CD4-positive, alpha-beta memory T cell (primary cell): ENCODE measurements at regions of chr19 and their contacts with region 1.

Region 1: GRCh38 chr19:15418588-15419412 is at the start of gene AKAP8L:
- DNase-seq: peak; percentile 99 to 100 (median 100)
- H3K4me3 ChIP-seq: peak within 1 kb of the TSS; percentile 91 to 95
- H3K4me3 Mint-ChIP-seq: peak within 1 kb of the TSS; percentile 96 to 100 (median 100)
- H3K27ac ChIP-seq: peak within 1 kb of the TSS; percentile 77
- H3K27ac Mint-ChIP-seq: peak within 1 kb of the TSS; percentile 87 to 100 (median 99)
- H3K4me1 ChIP-seq: peaks cover 45% of the 10 kb centered on the region
- H3K4me1 Mint-ChIP-seq: peaks cover 31 to 58% (median 38%) of the 10 kb centered on the region in 4 donors
- H3K27me3 ChIP-seq: no peaks in the 10 kb centered on the region
- H3K27me3 Mint-ChIP-seq: no peaks in the 10 kb centered on the region
- total RNA-seq, gene AKAP8L: 177 to 182 TPM

Region 2: DNA sequence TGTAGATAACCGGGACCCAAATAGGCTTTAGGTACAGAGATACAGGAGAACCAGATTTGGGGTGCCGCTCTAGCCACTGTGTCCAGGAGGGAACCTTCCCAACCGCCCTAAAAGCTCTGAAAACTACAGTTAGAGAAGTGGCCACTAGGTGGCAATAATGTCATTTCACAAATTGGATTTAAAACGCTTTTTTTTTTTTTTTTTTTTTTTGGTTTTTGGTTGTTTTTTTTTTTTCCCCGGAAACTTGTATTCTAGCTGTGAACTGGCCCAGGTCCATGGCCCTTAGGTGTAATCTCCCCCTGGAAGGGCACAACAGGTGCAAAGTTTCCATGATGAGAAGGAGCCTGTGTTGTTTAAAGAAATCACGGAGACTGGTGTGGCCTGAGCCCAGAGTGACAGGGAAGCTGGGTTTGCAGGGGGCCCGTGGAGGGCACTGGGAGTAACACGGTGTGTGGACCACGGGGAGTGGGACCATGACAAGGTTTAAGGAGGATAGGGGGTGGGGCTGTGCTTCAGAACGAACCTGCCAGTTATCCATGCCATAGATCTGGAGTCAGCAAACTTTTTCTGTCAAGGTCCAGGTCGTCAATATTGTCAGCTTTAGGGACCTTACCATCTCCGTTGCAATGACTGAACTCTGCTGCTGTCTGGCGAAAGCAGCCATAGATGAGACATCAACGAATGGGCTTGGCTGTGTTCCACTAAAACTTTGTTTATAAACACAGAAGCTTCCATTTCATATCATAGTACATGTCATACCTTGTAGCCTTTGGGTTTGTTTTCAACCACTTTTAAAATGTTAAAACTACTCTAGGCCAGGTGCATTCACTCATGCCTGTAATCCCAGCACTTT is 326.7 kb before region 1 on chr19:
- CTCF ChIA-PET with region 1: interaction called, 12 read pairs
- POLR2A ChIA-PET with region 1: interaction called, 4 read pairs
- intact Hi-C with region 1: loop called (anchors 2 kb)
- DNase-seq: peak; percentile 56 to 67 (median 65)
- H3K4me3 ChIP-seq: no peak overlapping the region
- H3K4me3 Mint-ChIP-seq: peak overlapping the region in 1 of 8 donors; percentile 8
- H3K27ac ChIP-seq: no peak overlapping the region
- H3K27ac Mint-ChIP-seq: peak overlapping the region in 2 of 7 donors; percentile 63 to 65
- H3K4me1 ChIP-seq: peaks cover 6% of the 10 kb centered on the region
- H3K4me1 Mint-ChIP-seq: peaks cover 0 to 4% (median 3%) of the 10 kb centered on the region in 4 donors
- H3K27me3 ChIP-seq: no peaks in the 10 kb centered on the region
- H3K27me3 Mint-ChIP-seq: peaks cover 5 to 9% of the 10 kb centered on the region in 2 donors

Region 3: GRCh38 chr19:15264061-15264932 is 154.5 kb before region 1 on chr19:
- CTCF ChIA-PET with region 1: interaction called, 4 read pairs
- POLR2A ChIA-PET with region 1: interaction called, 3 read pairs
- intact Hi-C with region 1: loop called (anchors 1 kb)
- DNase-seq: peak; percentile 51 to 66 (median 62)
- H3K4me3 ChIP-seq: no peak overlapping the region
- H3K4me3 Mint-ChIP-seq: no peak overlapping the region
- H3K27ac ChIP-seq: no peak overlapping the region
- H3K27ac Mint-ChIP-seq: peak overlapping the region in 2 of 7 donors; percentile 52 to 61
- H3K4me1 ChIP-seq: no peaks in the 10 kb centered on the region
- H3K4me1 Mint-ChIP-seq: peaks cover 2 to 13% (median 8%) of the 10 kb centered on the region in 4 donors
- H3K27me3 ChIP-seq: no peaks in the 10 kb centered on the region
- H3K27me3 Mint-ChIP-seq: no peaks in the 10 kb centered on the region

Region 4: GRCh38 chr19:15432629-15433518 is 14.1 kb after region 1 on chr19:
- CTCF ChIA-PET with region 1: interaction called, 32 read pairs
- POLR2A ChIA-PET with region 1: interaction called, 75 read pairs
- intact Hi-C with region 1: loop called (anchors 1 kb)
- DNase-seq: peak; percentile 91 to 92 (median 91)
- H3K4me3 ChIP-seq: peak overlapping the region; percentile 78 to 91
- H3K4me3 Mint-ChIP-seq: peak overlapping the region; percentile 87 to 95 (median 92)
- H3K27ac ChIP-seq: peak overlapping the region; percentile 61
- H3K27ac Mint-ChIP-seq: peak overlapping the region; percentile 87 to 99 (median 94)
- H3K4me1 ChIP-seq: peaks cover 31% of the 10 kb centered on the region
- H3K4me1 Mint-ChIP-seq: peaks cover 21 to 44% (median 27%) of the 10 kb centered on the region in 4 donors
- H3K27me3 ChIP-seq: no peaks in the 10 kb centered on the region
- H3K27me3 Mint-ChIP-seq: no peaks in the 10 kb centered on the region

Region 5: GRCh38 chr19:15466851-15467733 is 48.3 kb after region 1 on chr19:
- CTCF ChIA-PET with region 1: interaction called, 82 read pairs
- POLR2A ChIA-PET with region 1: interaction called, 132 read pairs
- intact Hi-C with region 1: loop called (anchors 1 kb)
- DNase-seq: peak; percentile 56 to 89 (median 65)
- H3K4me3 ChIP-seq: no peak overlapping the region
- H3K4me3 Mint-ChIP-seq: peak overlapping the region; percentile 74 to 89 (median 78)
- H3K27ac ChIP-seq: peak overlapping the region; percentile 38
- H3K27ac Mint-ChIP-seq: peak overlapping the region; percentile 83 to 97 (median 91)
- H3K4me1 ChIP-seq: peaks cover 71% of the 10 kb centered on the region
- H3K4me1 Mint-ChIP-seq: peaks cover 38 to 74% (median 55%) of the 10 kb centered on the region in 4 donors
- H3K27me3 ChIP-seq: no peaks in the 10 kb centered on the region
- H3K27me3 Mint-ChIP-seq: no peaks in the 10 kb centered on the region

Region 6: DNA sequence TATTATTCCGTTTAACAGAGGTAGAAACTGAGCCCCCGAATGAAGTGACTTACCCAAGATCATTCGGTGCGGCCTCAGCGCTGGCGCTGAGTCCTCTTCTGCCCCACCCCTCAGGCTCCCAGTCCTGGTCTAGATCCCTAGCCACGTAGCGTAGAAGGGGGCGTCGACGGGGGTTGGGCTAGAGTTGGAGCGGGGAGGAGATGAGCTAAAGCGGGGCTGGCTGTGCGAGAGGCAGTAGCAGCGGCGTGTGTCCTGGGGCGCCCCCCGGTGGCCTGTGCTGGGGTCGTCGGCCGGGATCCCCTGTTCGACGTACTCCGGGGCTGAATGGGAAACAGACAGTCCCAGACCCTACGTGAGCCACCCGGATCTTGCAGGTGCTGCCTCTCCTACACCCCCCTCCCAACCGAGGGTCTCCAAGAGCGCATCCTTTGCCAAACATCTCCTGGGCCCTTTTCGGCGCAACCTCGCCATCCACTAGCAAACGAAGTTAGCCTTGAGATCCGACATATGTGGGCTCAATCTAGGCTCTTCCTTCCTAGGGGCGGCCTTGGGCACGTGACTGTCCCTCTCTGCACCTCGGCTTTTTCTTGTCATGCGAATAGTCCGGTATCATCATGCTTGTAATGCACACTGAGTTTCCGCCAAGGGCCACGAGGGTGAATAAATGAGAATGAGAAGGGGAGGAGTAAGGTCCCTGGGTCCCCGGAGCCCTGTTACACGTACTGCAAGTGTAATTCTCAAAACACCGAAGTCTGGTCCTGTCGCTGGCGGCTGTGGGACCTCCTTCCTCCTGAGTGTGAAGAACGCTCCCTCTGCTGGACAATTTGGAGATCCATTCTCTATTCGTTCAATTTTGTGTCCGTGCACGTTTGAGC is 137.2 kb after region 1 on chr19:
- CTCF ChIA-PET with region 1: interaction called, 319 read pairs
- POLR2A ChIA-PET with region 1: interaction called, 105 read pairs
- intact Hi-C with region 1: loop called (anchors 1 kb)
- DNase-seq: peak; percentile 92 to 97 (median 93)
- H3K4me3 ChIP-seq: peak overlapping the region; percentile 72 to 73
- H3K4me3 Mint-ChIP-seq: peak overlapping the region; percentile 78 to 90 (median 84)
- H3K27ac ChIP-seq: peak overlapping the region; percentile 58
- H3K27ac Mint-ChIP-seq: peak overlapping the region; percentile 81 to 96 (median 94)
- H3K4me1 ChIP-seq: peaks cover 21% of the 10 kb centered on the region
- H3K4me1 Mint-ChIP-seq: peaks cover 11 to 31% (median 20%) of the 10 kb centered on the region in 4 donors
- H3K27me3 ChIP-seq: no peaks in the 10 kb centered on the region
- H3K27me3 Mint-ChIP-seq: peaks cover 0 to 4% of the 10 kb centered on the region in 2 donors